Activated CD8-positive, alpha-beta memory T cell treated with anti-CD3 and anti-CD28 coated beads, Interleukin-2, amount 10 ng/mL, durations not matched to agents 7 days and 5 days (primary cell): ENCODE measurements at regions of chr2 and their contacts with region 1.

Region 1: GRCh38 chr2:36245651-36246050 is 109.9 kb upstream of the CRIM1 start:
- DNase-seq: no peak
- ATAC-seq: no peak
- H3K4me3 Mint-ChIP-seq: no peak overlapping the region
- H3K27ac Mint-ChIP-seq: peak overlapping the region; percentile 96
- H3K4me1 Mint-ChIP-seq: peaks cover 69% of the 10 kb centered on the region
- H3K27me3 Mint-ChIP-seq: peaks cover 3% of the 10 kb centered on the region

Region 2: DNA sequence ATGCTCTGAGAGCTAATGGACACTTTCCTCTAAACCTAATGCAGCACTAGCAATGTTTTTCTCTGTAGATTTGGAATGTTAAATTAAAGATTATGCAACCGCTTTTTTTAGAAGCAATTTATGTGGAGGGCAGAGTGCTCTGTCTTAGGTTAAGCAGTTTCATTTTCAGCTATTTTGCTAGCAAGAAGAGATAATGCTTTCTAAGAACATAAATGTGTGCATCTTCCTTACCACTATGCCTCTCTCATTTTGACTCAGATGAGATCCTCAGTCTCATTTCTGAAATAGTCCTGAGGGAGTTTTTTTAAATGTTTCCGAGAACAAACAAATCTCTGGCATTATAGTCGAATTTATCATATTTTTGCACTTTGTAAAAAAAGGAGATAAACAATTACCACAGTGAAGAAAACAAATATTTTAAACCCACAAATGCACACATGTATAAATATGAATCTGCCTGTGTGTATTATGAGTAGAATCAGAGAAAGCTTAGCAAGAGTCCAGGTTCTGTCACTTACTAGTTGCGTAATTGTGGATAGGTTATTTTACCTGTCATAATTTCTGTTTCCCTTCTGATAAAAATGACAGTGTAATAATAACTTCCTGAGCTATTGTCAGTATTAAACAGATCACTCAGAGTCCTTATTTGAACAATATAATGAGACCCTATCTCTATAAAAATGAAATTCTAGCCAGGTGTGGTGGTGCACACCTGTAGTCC is 97.8 kb before region 1 on chr2:
- CTCF ChIA-PET with region 1: interaction called, 12 read pairs
- DNase-seq: no peak
- ATAC-seq: peak; percentile 88
- H3K4me3 Mint-ChIP-seq: peak overlapping the region; percentile 42
- H3K27ac Mint-ChIP-seq: peak overlapping the region; percentile 85
- H3K4me1 Mint-ChIP-seq: peaks cover 33% of the 10 kb centered on the region
- H3K27me3 Mint-ChIP-seq: peaks cover 15% of the 10 kb centered on the region

Region 3: GRCh38 chr2:36597532-36598377 is 352.1 kb after region 1 on chr2 and contains the start of gene FEZ2:
- CTCF ChIA-PET with region 1: no interaction called
- DNase-seq: peak; percentile 81
- ATAC-seq: peak; percentile 98
- H3K4me3 Mint-ChIP-seq: peak within 1 kb of the TSS; percentile 82
- H3K27ac Mint-ChIP-seq: peak within 1 kb of the TSS; percentile 88
- H3K4me1 Mint-ChIP-seq: peaks cover 16% of the 10 kb centered on the region
- H3K27me3 Mint-ChIP-seq: no peaks in the 10 kb centered on the region
- total RNA-seq, gene FEZ2: 9.9 to 13.3 TPM